Naive thymus-derived CD4-positive, alpha-beta T cell (primary cell): ENCODE measurements at regions of chr10 and their contacts with region 1.

Region 1: DNA sequence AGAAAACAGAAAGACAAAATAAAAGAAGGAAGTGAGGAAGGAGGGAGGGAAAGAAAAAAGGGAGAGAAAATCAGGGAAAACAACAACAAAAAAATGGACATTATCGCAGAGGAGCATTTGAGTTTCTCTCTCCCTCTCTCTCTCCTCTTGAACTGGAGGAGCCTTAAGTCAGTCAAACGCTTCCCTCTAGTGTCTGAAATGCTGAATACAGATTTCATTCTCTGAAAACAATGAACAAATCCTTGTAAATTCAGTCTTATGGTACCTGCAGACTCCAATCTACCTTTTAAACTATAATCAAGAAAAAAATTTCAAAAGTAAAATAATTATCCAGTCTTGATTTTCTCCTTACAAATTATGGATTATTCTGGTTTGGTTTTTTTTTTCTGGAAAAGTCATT is 89.2 kb upstream of the PFKP start:
- DNase-seq: peak in 5 of 9 donors; percentile 1 to 26 (median 10)
- ATAC-seq: no peak
- H3K4me3 ChIP-seq: no peak overlapping the region
- H3K4me3 Mint-ChIP-seq: no peak overlapping the region
- H3K27ac ChIP-seq: no peak overlapping the region
- H3K27ac Mint-ChIP-seq: no peak overlapping the region
- H3K4me1 ChIP-seq: no peaks in the 10 kb centered on the region
- H3K4me1 Mint-ChIP-seq: peaks cover 0 to 2% (median 0%) of the 10 kb centered on the region in 7 donors
- H3K27me3 ChIP-seq: no peaks in the 10 kb centered on the region
- H3K27me3 Mint-ChIP-seq: peaks cover 0 to 6% (median 0%) of the 10 kb centered on the region in 5 donors

Region 2: GRCh38 chr10:1754506-1755153 is 1223.5 kb before region 1 on chr10:
- CTCF ChIA-PET with region 1: no interaction called
- POLR2A ChIA-PET with region 1: no interaction called
- intact Hi-C with region 1: loop called in 1 of 2 experiments (anchors 5 kb)
- DNase-seq: no peak
- ATAC-seq: no peak
- H3K4me3 ChIP-seq: no peak overlapping the region
- H3K4me3 Mint-ChIP-seq: no peak overlapping the region
- H3K27ac ChIP-seq: no peak overlapping the region
- H3K27ac Mint-ChIP-seq: no peak overlapping the region
- H3K4me1 ChIP-seq: peaks cover 0 to 4% of the 10 kb centered on the region in 2 donors
- H3K4me1 Mint-ChIP-seq: peaks cover 0 to 4% (median 0%) of the 10 kb centered on the region in 7 donors
- H3K27me3 ChIP-seq: no peaks in the 10 kb centered on the region
- H3K27me3 Mint-ChIP-seq: peaks cover 0 to 29% (median 10%) of the 10 kb centered on the region in 5 donors

Region 3: GRCh38 chr10:2556883-2557282 is 421.2 kb before region 1 on chr10:
- CTCF ChIA-PET with region 1: no interaction called
- POLR2A ChIA-PET with region 1: no interaction called
- intact Hi-C with region 1: no loop called
- DNase-seq: no peak
- ATAC-seq: no peak
- H3K4me3 ChIP-seq: no peak overlapping the region
- H3K4me3 Mint-ChIP-seq: no peak overlapping the region
- H3K27ac ChIP-seq: no peak overlapping the region
- H3K27ac Mint-ChIP-seq: no peak overlapping the region
- H3K4me1 ChIP-seq: no peaks in the 10 kb centered on the region
- H3K4me1 Mint-ChIP-seq: no peaks in the 10 kb centered on the region
- H3K27me3 ChIP-seq: peaks cover 0 to 2% of the 10 kb centered on the region in 2 donors
- H3K27me3 Mint-ChIP-seq: peaks cover 0 to 15% (median 4%) of the 10 kb centered on the region in 5 donors

Region 4: GRCh38 chr10:2927958-2928840 is 49.9 kb before region 1 on chr10:
- CTCF ChIA-PET with region 1: no interaction called
- POLR2A ChIA-PET with region 1: no interaction called
- intact Hi-C with region 1: loop called in 1 of 2 experiments (anchors 1 kb)
- DNase-seq: peak in 6 of 9 donors; percentile 7 to 73 (median 22)
- ATAC-seq: peak; percentile 61
- H3K4me3 ChIP-seq: no peak overlapping the region
- H3K4me3 Mint-ChIP-seq: peak overlapping the region in 1 of 10 donors; percentile 1
- H3K27ac ChIP-seq: no peak overlapping the region
- H3K27ac Mint-ChIP-seq: peak overlapping the region in 1 of 9 donors; percentile 28
- H3K4me1 ChIP-seq: no peaks in the 10 kb centered on the region
- H3K4me1 Mint-ChIP-seq: peaks cover 0 to 14% (median 11%) of the 10 kb centered on the region in 7 donors
- H3K27me3 ChIP-seq: no peaks in the 10 kb centered on the region
- H3K27me3 Mint-ChIP-seq: peaks cover 11 to 32% (median 20%) of the 10 kb centered on the region in 5 donors